CD4-positive, alpha-beta memory T cell (primary cell): ENCODE measurements at regions of chr4 and their contacts with region 1.

Region 1: DNA sequence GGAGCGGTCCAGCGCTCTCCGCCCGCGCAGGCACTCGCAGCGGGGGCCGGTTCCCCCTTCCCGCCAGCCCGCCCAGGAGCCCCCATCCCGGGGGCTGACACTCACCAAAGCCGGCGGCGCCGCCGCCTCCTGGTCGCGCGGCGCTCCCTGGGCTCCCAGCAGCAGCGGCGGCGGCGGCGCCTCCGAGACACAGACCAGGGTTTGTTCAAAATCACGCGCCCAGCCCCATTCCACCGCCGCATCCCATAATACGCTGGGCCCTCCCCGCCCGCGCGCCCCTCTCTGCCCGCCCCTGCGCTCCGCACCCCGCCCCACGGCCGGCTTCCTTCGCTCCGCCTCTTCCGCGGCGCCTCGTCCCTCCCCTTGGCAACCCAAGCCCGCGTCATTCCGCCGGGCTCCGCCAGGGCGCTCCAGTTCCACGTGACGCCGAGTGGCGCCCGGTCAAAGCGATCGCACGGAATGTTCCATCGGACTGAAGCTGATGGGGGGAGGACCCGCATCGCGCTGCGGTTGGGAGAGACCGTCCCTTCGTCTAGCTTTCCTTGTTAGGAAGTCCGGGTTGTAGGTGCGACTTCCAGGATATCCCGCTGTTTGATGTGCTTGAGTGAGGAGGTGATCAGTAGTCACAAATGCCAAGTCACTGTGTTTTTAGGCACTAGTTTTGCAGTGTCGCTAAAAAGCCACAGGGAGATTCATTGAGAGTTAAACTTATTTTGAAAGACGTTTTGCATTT is 2.2 kb upstream of the LIN54 start:
- DNase-seq: peak; percentile 96 to 99 (median 97)
- H3K4me3 ChIP-seq: peak overlapping the region; percentile 88 to 98
- H3K4me3 Mint-ChIP-seq: peak overlapping the region; percentile 91 to 97 (median 95)
- H3K27ac ChIP-seq: peak overlapping the region; percentile 89
- H3K27ac Mint-ChIP-seq: peak overlapping the region; percentile 87 to 97 (median 94)
- H3K4me1 ChIP-seq: peaks cover 43% of the 10 kb centered on the region
- H3K4me1 Mint-ChIP-seq: peaks cover 33 to 52% (median 39%) of the 10 kb centered on the region in 4 donors
- H3K27me3 ChIP-seq: no peaks in the 10 kb centered on the region
- H3K27me3 Mint-ChIP-seq: no peaks in the 10 kb centered on the region

Region 2: GRCh38 chr4:83034630-83035494 is 22.0 kb after region 1 on chr4 and contains the start of gene COPS4:
- CTCF ChIA-PET with region 1: interaction called, 24 read pairs
- POLR2A ChIA-PET with region 1: interaction called, 120 read pairs
- intact Hi-C with region 1: loop called (anchors 1 kb)
- DNase-seq: peak; percentile 93 to 99 (median 98)
- H3K4me3 ChIP-seq: peak within 1 kb of the TSS; percentile 76 to 84
- H3K4me3 Mint-ChIP-seq: peak within 1 kb of the TSS; percentile 98 to 100 (median 100)
- H3K27ac ChIP-seq: peak within 1 kb of the TSS; percentile 85
- H3K27ac Mint-ChIP-seq: peak within 1 kb of the TSS; percentile 94 to 100 (median 99)
- H3K4me1 ChIP-seq: peaks cover 25% of the 10 kb centered on the region
- H3K4me1 Mint-ChIP-seq: peaks cover 15 to 41% (median 25%) of the 10 kb centered on the region in 4 donors
- H3K27me3 ChIP-seq: no peaks in the 10 kb centered on the region
- H3K27me3 Mint-ChIP-seq: no peaks in the 10 kb centered on the region
- total RNA-seq, gene COPS4: 24.6 to 26.1 TPM

Region 3: GRCh38 chr4:84258905-84259830 is 1246.3 kb after region 1 on chr4:
- CTCF ChIA-PET with region 1: no interaction called
- POLR2A ChIA-PET with region 1: no interaction called
- intact Hi-C with region 1: no loop called
- DNase-seq: no peak
- H3K4me3 ChIP-seq: no peak overlapping the region
- H3K4me3 Mint-ChIP-seq: no peak overlapping the region
- H3K27ac ChIP-seq: no peak overlapping the region
- H3K27ac Mint-ChIP-seq: no peak overlapping the region
- H3K4me1 ChIP-seq: no peaks in the 10 kb centered on the region
- H3K4me1 Mint-ChIP-seq: no peaks in the 10 kb centered on the region
- H3K27me3 ChIP-seq: no peaks in the 10 kb centered on the region
- H3K27me3 Mint-ChIP-seq: no peaks in the 10 kb centered on the region